HCT116 (cell line): ENCODE measurements at regions of chr1 and their contacts with region 1.

Region 1: GRCh38 chr1:182962554-182963115 is 9.7 kb upstream of the SHCBP1L start:
- DNase-seq: peak; percentile 79
- ATAC-seq: peak; percentile 99
- H3K4me3 ChIP-seq: peak overlapping the region; percentile 29 to 37
- H3K27ac ChIP-seq: peak overlapping the region; percentile 3; the same call in 1 of the 2 replicates
- H3K4me1 ChIP-seq: peaks cover 3 to 8% of the 10 kb centered on the region in 2 experiments; a peak in 3 of 4 replicates
- H3K27me3 ChIP-seq: no peaks in the 10 kb centered on the region
- CTCF ChIP-seq: peak; percentile 89 to 97 (median 96)
- POLR2A ChIP-seq: peak; percentile 44
- RAD21 ChIP-seq: peak; percentile 99

Region 2: DNA sequence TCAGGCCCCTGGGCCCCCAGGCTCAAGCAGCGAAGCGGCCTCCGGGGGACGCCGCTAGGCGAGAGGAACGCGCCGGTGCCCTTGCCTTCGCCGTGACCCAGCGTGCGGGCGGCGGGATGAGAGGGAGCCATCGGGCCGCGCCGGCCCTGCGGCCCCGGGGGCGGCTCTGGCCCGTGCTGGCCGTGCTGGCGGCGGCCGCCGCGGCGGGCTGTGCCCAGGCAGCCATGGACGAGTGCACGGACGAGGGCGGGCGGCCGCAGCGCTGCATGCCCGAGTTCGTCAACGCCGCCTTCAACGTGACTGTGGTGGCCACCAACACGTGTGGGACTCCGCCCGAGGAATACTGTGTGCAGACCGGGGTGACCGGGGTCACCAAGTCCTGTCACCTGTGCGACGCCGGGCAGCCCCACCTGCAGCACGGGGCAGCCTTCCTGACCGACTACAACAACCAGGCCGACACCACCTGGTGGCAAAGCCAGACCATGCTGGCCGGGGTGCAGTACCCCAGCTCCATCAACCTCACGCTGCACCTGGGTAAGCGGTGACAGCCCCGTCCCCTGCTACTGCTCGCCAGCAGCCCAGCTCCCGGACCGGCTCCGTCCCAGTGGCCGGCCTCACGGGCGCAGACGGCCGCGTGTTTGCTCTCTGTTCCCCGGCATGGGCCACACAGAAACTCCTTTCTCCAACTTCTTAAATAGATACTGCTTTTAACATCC is 61.1 kb after region 1 on chr1:
- CTCF ChIA-PET with region 1: interaction called, 7 read pairs
- POLR2A ChIA-PET with region 1: interaction called, 3 read pairs
- RAD21 ChIA-PET with region 1: interaction called, 3 to 4 read pairs
- intact Hi-C with region 1: loop called (anchors 1 kb)
- DNase-seq: peak; percentile 61
- ATAC-seq: peak; percentile 77
- H3K4me3 ChIP-seq: peak overlapping the region; percentile 62 to 76
- H3K27ac ChIP-seq: peak overlapping the region; percentile 99
- H3K4me1 ChIP-seq: peaks cover 35 to 67% of the 10 kb centered on the region in 2 experiments
- H3K27me3 ChIP-seq: no peaks in the 10 kb centered on the region
- CTCF ChIP-seq: peak; percentile 29 to 70 (median 56); a peak in 5 of 6 replicates
- POLR2A ChIP-seq: no peak
- RAD21 ChIP-seq: peak; percentile 57

Region 3: GRCh38 chr1:183039985-183040447 is 77.4 kb after region 1 on chr1:
- CTCF ChIA-PET with region 1: no interaction called
- POLR2A ChIA-PET with region 1: no interaction called
- RAD21 ChIA-PET with region 1: no interaction called
- intact Hi-C with region 1: no loop called
- DNase-seq: no peak
- ATAC-seq: no peak
- H3K4me3 ChIP-seq: no peak overlapping the region
- H3K27ac ChIP-seq: no peak overlapping the region
- H3K4me1 ChIP-seq: peaks cover 0 to 20% of the 10 kb centered on the region in 2 experiments; a peak in 2 of 4 replicates
- H3K27me3 ChIP-seq: no peaks in the 10 kb centered on the region
- CTCF ChIP-seq: no peak
- POLR2A ChIP-seq: no peak
- RAD21 ChIP-seq: no peak

Region 4: GRCh38 chr1:183185941-183186490 is 223.4 kb after region 1 on chr1 and contains the start of gene LAMC2:
- CTCF ChIA-PET with region 1: no interaction called
- POLR2A ChIA-PET with region 1: no interaction called
- RAD21 ChIA-PET with region 1: no interaction called
- intact Hi-C with region 1: loop called (anchors 1 kb)
- DNase-seq: peak; percentile 95
- ATAC-seq: peak; percentile 96
- H3K4me3 ChIP-seq: peak within 1 kb of the TSS; percentile 70 to 72
- H3K27ac ChIP-seq: peak within 1 kb of the TSS; percentile 68
- H3K4me1 ChIP-seq: peaks cover 9 to 39% of the 10 kb centered on the region in 2 experiments
- H3K27me3 ChIP-seq: no peaks in the 10 kb centered on the region
- CTCF ChIP-seq: peak; percentile 33 to 61 (median 58); a peak in 4 of 6 replicates
- POLR2A ChIP-seq: peak; percentile 55
- RAD21 ChIP-seq: peak; percentile 82
- total RNA-seq, gene LAMC2: 22.2 TPM

Region 5: GRCh38 chr1:183234660-183235476 is 272.2 kb after region 1 on chr1:
- CTCF ChIA-PET with region 1: interaction called, 20 read pairs
- POLR2A ChIA-PET with region 1: no interaction called
- RAD21 ChIA-PET with region 1: interaction called in 1 of 2 experiments, 5 read pairs
- intact Hi-C with region 1: loop called (anchors 1 kb)
- DNase-seq: peak; percentile 62
- ATAC-seq: peak; percentile 86
- H3K4me3 ChIP-seq: peak overlapping the region; percentile 34 to 54
- H3K27ac ChIP-seq: peak overlapping the region; percentile 78
- H3K4me1 ChIP-seq: peaks cover 23% of the 10 kb centered on the region in 2 experiments
- H3K27me3 ChIP-seq: no peaks in the 10 kb centered on the region
- CTCF ChIP-seq: peak; percentile 54 to 95 (median 85); a peak in 5 of 6 replicates
- POLR2A ChIP-seq: no peak
- RAD21 ChIP-seq: no peak; the same call in 1 of the 2 replicates

Region 6: DNA sequence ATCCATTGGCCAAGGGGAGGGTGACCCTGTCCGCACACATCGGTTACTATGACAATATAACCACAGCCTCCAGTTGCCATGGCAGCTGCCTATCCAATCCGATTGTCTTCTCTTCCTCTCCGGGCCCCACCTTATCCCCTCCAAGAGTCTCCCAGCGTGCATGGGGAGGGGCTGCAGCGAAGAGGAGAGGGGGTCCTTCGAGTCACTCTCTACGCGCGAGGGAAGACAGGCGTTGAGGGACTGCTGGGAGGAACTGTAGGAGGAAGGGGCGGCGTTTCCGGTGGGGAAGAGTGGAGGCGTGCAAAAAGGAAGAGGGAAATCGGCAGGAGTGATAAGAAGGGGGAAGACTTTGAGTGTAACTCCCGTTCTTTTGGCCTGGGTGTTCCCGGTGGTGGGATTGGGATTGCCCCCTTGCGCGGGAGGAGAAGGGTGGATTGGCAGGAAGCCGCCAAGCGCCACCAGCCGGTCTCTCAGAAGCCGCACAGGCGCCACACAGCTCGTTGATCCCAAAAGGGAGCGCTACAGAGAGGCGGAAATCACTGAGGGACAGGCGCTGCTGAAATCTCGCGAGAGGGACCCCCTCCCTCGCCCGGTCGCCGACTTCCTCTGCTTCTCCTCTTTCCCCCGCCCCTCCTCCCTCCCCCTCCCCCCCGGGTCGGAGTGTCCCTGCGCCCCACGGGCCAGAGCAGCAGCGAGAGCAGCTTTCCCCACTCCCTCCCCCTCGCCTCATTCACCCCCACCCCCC is 509.3 kb after region 1 on chr1:
- CTCF ChIA-PET with region 1: no interaction called
- POLR2A ChIA-PET with region 1: no interaction called
- RAD21 ChIA-PET with region 1: no interaction called
- intact Hi-C with region 1: loop called (anchors 5 kb)
- DNase-seq: peak; percentile 95
- ATAC-seq: peak; percentile 75
- H3K4me3 ChIP-seq: peak overlapping the region; percentile 91 to 95
- H3K27ac ChIP-seq: peak overlapping the region; percentile 93
- H3K4me1 ChIP-seq: peaks cover 5 to 37% of the 10 kb centered on the region in 2 experiments; a peak in 3 of 4 replicates
- H3K27me3 ChIP-seq: no peaks in the 10 kb centered on the region
- CTCF ChIP-seq: no peak
- POLR2A ChIP-seq: no peak
- RAD21 ChIP-seq: no peak